ENCODE measurements at regions of chr9 and their contacts with region 1.

Region 1: GRCh38 chr9:35489313-35490154 is at the start of gene RUSC2:
- DNase-seq: peak; percentile 81
- H3K4me3 ChIP-seq: peak within 1 kb of the TSS; percentile 82 to 96 (median 92)
- H3K27ac ChIP-seq: peak within 1 kb of the TSS; percentile 47
- H3K4me1 ChIP-seq: peaks cover 20% of the 10 kb centered on the region
- H3K27me3 ChIP-seq: no peaks in the 10 kb centered on the region
- CTCF ChIP-seq: peak; percentile 13 to 26
- total RNA-seq, gene RUSC2: 27.3 to 30.0 TPM

Region 2: DNA sequence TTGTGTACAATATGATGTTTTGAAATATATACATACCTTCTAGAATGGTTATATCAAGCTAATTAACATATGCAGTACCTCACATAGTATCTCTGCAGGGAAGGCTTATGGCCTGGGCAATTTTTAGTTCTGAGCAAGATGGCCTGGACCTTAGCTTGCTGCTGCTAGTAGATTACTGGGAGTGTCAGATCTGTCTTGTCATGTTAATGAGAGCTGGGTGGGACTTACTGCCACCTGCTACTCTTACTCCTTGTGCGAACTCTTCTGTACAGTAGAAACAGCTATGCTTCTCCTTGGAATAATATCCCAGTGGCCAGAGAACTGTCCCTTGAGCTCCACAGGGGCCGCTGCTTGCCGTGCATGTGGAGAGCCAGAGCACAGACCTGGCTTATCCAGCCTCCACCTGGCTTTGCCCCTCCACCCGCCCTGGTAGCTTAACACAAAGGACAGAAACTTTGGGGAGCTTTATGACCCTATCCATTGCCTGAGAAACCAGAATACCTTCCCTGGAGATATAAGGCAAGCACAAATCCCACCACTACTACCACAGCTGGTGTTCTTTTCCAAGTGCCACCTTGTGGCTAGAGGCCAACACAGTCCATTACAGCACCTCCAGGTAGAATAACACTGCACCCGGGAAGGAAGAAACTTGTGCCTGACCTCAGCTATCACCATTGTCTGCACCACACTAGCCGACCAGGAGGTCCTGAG is 74.0 kb before region 1 on chr9:
- CTCF ChIA-PET with region 1: interaction called, 12 read pairs
- dilution Hi-C with region 1: no loop called
- in situ Hi-C with region 1: no loop called
- intact Hi-C with region 1: no loop called
- DNase-seq: no peak
- H3K4me3 ChIP-seq: no peak overlapping the region
- H3K27ac ChIP-seq: no peak overlapping the region
- H3K4me1 ChIP-seq: no peaks in the 10 kb centered on the region
- H3K27me3 ChIP-seq: no peaks in the 10 kb centered on the region
- CTCF ChIP-seq: peak; percentile 6 to 11

Region 3: GRCh38 chr9:35518226-35518821 is 28.8 kb after region 1 on chr9:
- CTCF ChIA-PET with region 1: no interaction called
- dilution Hi-C with region 1: no loop called
- in situ Hi-C with region 1: no loop called
- intact Hi-C with region 1: loop called (anchors 1 kb)
- DNase-seq: peak; percentile 86
- H3K4me3 ChIP-seq: no peak overlapping the region
- H3K27ac ChIP-seq: peak overlapping the region; percentile 79
- H3K4me1 ChIP-seq: peaks cover 74% of the 10 kb centered on the region
- H3K27me3 ChIP-seq: no peaks in the 10 kb centered on the region
- CTCF ChIP-seq: no peak

Region 4: GRCh38 chr9:35882263-35882848 is 392.8 kb after region 1 on chr9:
- CTCF ChIA-PET with region 1: no interaction called
- dilution Hi-C with region 1: no loop called
- in situ Hi-C with region 1: no loop called
- intact Hi-C with region 1: loop called (anchors 10 kb)
- DNase-seq: peak; percentile 46
- H3K4me3 ChIP-seq: no peak overlapping the region
- H3K27ac ChIP-seq: no peak overlapping the region
- H3K4me1 ChIP-seq: no peaks in the 10 kb centered on the region
- H3K27me3 ChIP-seq: no peaks in the 10 kb centered on the region
- CTCF ChIP-seq: peak; percentile 99

Measured in mammary epithelial cell (primary cell).